Right lobe of liver (tissue), 6 donors: ENCODE measurements at regions of chr3 and their contacts with region 1.

Region 1: DNA sequence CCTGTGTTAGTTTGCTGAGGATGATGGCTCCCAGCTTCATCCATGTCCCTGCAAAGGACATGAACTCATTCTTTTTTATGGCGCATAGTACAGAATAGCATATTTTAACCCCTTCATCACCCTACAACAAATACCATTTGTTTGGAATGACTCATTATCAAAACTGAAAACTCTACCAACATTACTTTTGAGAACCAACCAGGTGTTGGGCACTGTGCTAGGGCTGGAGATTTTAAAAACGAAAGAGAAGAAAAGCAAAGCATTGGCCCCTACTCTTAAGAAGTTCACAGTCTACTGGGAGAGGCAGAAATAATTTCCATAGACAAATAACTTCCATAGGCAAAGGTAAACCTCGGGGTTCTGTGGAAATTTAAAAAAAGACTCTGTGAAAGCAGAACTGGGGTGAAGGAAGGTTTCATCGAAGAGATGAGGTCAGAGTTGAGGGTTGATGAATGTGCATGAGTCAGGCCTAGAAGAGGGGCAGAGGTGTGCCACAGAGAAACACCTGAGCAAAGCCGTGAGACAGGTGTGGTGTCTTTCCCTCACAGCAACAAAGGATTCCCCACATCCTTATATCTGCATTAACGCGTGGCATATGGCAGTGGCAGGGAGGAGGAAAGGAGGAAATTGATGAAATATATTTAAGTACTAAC is 51.0 kb downstream of the MCF2L2 start:
- DNase-seq: no peak
- ATAC-seq: no peak
- H3K4me3 ChIP-seq: no peak overlapping the region
- H3K27ac ChIP-seq: no peak overlapping the region
- H3K4me1 ChIP-seq: no peaks in the 10 kb centered on the region
- H3K27me3 ChIP-seq: no peaks in the 10 kb centered on the region
- CTCF ChIP-seq: no peak
- POLR2A ChIP-seq: no peak

Region 2: GRCh38 chr3:183193818-183194689 is 183.4 kb before region 1 on chr3:
- intact Hi-C with region 1: loop called in 1 of 2 experiments (anchors 5 kb)
- DNase-seq: no peak
- ATAC-seq: peak; percentile 32 to 89 (median 58)
- H3K4me3 ChIP-seq: no peak overlapping the region
- H3K27ac ChIP-seq: no peak overlapping the region
- H3K4me1 ChIP-seq: no peaks in the 10 kb centered on the region
- H3K27me3 ChIP-seq: no peaks in the 10 kb centered on the region
- CTCF ChIP-seq: no peak
- POLR2A ChIP-seq: no peak

Region 3: GRCh38 chr3:183447206-183448001 is 70.0 kb after region 1 on chr3:
- intact Hi-C with region 1: no loop called
- DNase-seq: peak; percentile 83 to 87 (median 85)
- ATAC-seq: peak; percentile 88 to 95 (median 92)
- H3K4me3 ChIP-seq: peak overlapping the region; percentile 68 to 80 (median 74)
- H3K27ac ChIP-seq: peak overlapping the region; percentile 18 to 56 (median 55)
- H3K4me1 ChIP-seq: peaks cover 0 to 6% (median 0%) of the 10 kb centered on the region in 4 donors
- H3K27me3 ChIP-seq: no peaks in the 10 kb centered on the region
- CTCF ChIP-seq: no peak
- POLR2A ChIP-seq: peak; percentile 75